ENCODE measurements at regions of chr12 and their contacts with region 1.

Region 1: DNA sequence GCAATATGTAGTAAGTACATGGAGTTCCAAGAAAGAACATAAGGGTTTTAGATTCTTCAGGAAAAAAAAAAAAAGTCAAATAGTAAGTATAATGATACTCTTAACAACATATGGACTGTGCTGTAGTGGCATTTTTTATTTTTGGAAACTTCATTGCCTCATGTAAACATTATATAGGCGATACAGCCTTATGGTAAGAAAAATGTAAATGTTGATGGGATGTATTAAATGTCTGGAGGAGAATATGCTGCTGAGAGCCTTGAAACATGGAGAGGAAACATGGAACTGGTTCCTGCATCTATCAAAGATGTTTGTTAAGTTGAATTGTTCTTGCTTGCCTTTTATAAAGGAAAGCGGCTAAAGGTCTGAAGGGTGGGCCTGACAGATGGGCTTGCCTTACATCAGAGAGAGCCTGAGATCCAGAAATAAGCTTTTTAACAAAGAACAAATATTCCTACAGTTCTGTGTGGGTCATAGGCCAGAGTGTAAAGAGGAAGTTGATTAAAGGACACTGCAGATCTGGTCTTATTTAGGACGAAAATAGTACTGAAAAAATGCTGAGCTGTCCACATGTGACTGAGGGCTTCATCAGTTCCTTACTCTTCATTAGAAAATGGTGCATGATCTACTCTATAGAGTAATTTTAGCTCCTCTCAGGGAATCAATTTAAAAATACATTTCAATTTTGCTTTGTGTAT is 448.1 kb upstream of the DCN start:
- DNase-seq: no peak
- H3K4me3 ChIP-seq: no peak overlapping the region
- H3K27ac ChIP-seq: no peak overlapping the region
- H3K4me1 ChIP-seq: no peaks in the 10 kb centered on the region
- H3K27me3 ChIP-seq: no peaks in the 10 kb centered on the region
- CTCF ChIP-seq: no peak

Region 2: GRCh38 chr12:91603060-91603459 is 27.7 kb before region 1 on chr12:
- CTCF ChIA-PET with region 1: no interaction called
- POLR2A ChIA-PET with region 1: interaction called, 17 read pairs
- intact Hi-C with region 1: no loop called
- DNase-seq: no peak
- H3K4me3 ChIP-seq: no peak overlapping the region
- H3K27ac ChIP-seq: no peak overlapping the region
- H3K4me1 ChIP-seq: no peaks in the 10 kb centered on the region
- H3K27me3 ChIP-seq: no peaks in the 10 kb centered on the region
- CTCF ChIP-seq: no peak